Activated B cell treated with CpG ODN at 0.5 μM for 24 hours (primary cell): ENCODE measurements at regions of chr3 and their contacts with region 1.

Region 1: DNA sequence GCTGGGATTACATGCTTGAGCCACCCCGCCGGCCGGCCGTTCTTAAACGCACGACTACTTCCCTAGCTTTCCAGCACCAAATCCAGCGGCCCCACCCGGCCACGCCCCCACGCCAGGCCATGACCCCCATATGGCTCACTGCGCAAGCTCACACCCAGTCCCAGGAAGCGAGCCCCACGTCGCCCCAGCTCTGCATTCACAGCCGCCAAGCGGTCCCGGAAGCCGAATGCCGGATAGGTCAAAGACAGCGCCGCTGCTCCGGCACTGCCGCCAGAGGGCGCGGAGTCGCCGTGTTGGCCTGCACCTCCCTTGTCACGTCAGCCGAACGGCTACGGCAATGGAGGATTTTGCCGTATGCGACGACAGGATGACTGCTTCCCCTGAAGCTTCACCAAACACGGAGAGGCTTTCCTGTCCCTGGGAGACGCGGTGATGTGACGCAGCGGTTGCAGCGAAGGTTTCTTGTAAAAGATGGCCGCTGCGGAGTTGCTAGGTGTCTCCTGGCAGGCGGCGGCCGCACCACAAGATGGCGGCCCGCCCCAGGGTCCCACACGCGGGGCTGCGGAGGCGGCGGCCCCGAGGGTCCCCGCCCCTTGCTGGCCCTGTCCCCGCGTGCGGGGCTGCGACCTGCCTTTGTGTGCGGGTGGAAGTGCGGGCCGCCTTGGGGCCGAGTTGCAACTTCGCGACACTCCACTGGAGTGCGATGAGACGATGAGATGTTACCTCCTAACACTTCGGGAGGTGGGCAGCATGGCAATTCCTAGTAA is 30.2 kb upstream of the RPN1 start:
- DNase-seq: peak; percentile 93
- ATAC-seq: peak; percentile 96
- H3K4me3 Mint-ChIP-seq: peak overlapping the region; percentile 92
- H3K27ac Mint-ChIP-seq: peak overlapping the region; percentile 94
- H3K4me1 Mint-ChIP-seq: peaks cover 34% of the 10 kb centered on the region
- H3K27me3 Mint-ChIP-seq: no peaks in the 10 kb centered on the region
- CTCF ChIP-seq: peak; percentile 62

Region 2: DNA sequence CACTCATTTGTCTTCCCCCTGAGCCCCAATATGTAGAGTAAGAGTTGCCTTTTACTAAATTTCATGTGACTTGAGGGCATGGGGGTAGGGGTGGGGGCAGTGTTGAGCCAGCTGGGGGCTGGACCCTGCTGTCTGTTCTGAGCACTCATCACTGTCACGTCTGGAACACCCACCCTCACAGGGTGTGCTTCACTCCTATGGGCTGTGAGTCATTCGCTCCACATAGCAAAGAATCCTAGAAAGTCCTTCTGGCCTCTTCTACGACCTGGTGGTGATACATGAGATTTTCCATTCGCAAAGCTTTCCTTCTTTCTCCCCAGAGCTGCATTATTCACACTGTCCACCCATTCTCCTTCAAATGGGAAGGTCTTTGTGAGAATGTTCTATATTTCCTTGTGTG is 814.8 kb before region 1 on chr3:
- CTCF ChIA-PET with region 1: no interaction called
- POLR2A ChIA-PET with region 1: no interaction called
- intact Hi-C with region 1: no loop called
- DNase-seq: no peak
- ATAC-seq: no peak
- H3K4me3 Mint-ChIP-seq: no peak overlapping the region
- H3K27ac Mint-ChIP-seq: no peak overlapping the region
- H3K4me1 Mint-ChIP-seq: no peaks in the 10 kb centered on the region
- H3K27me3 Mint-ChIP-seq: no peaks in the 10 kb centered on the region
- CTCF ChIP-seq: no peak

Region 3: DNA sequence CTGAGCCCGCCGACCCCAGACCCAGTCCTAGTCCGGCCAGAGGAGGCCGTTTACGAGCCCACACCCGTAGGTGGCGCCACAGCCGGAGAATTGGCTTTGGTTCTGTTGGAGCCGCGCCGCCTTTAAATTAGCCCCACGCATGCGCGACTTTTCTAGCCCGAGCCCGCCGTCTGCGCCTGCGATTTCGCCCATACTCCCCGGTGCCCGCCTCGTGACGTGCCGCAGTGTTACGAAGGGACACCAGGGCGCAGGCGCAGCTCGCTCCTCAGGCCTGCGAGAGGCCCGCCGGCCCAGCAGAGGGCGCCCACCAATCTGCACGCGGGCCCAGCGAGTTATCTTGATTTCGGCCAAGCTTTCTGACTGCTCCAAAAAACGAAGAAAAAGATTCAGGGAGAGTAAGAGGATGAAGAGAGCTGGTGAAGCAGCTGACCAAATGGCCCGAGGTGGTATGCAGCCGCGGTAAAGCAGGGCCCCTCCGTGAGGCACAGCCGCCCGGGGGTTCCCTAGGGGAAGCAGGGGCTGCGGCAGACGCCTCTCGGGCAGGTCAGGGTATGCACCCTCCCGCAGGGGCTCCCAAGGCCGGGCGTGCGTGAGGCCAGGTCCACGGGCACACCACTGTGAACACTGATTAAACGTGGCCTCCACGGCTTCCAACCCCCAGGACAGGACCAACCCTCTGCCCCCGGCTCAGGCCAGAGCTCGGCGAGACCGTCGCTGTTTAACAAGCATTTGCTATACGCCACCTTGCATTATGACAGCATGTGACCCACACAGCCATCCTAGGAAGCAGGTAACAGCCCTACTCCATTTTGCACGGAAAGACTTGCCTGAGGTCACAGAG is 63.0 kb before region 1 on chr3:
- CTCF ChIA-PET with region 1: interaction called, 12 read pairs
- POLR2A ChIA-PET with region 1: interaction called, 20 read pairs
- intact Hi-C with region 1: loop called (anchors 1 kb)
- DNase-seq: peak; percentile 96
- ATAC-seq: peak; percentile 96
- H3K4me3 Mint-ChIP-seq: peak overlapping the region; percentile 91
- H3K27ac Mint-ChIP-seq: peak overlapping the region; percentile 88
- H3K4me1 Mint-ChIP-seq: peaks cover 23% of the 10 kb centered on the region
- H3K27me3 Mint-ChIP-seq: no peaks in the 10 kb centered on the region
- CTCF ChIP-seq: peak; percentile 94

Region 4: DNA sequence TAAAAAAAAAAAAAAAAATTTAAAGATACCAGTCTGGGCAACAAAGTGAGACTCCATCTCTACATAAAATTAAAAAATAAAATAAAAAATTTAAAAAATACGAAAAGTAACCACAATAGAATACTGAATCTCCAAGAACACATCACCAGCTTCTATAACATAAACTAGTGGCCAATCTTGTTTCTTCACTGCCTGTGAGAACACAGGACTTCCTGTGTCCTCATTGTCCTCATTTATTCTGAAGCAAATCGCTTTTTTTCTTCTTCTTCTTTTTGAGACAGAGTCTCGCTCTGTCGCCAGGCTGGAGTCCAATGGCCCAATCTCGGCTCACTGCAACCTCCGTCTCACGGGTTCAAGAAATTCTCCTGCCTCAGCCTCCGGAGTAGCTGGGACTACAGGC is 16.6 kb after region 1 on chr3:
- CTCF ChIA-PET with region 1: no interaction called
- POLR2A ChIA-PET with region 1: interaction called, 11 read pairs
- intact Hi-C with region 1: no loop called
- DNase-seq: no peak
- ATAC-seq: no peak
- H3K4me3 Mint-ChIP-seq: peak overlapping the region; percentile 24
- H3K27ac Mint-ChIP-seq: no peak overlapping the region
- H3K4me1 Mint-ChIP-seq: peaks cover 2% of the 10 kb centered on the region
- H3K27me3 Mint-ChIP-seq: no peaks in the 10 kb centered on the region
- CTCF ChIP-seq: no peak

Region 5: DNA sequence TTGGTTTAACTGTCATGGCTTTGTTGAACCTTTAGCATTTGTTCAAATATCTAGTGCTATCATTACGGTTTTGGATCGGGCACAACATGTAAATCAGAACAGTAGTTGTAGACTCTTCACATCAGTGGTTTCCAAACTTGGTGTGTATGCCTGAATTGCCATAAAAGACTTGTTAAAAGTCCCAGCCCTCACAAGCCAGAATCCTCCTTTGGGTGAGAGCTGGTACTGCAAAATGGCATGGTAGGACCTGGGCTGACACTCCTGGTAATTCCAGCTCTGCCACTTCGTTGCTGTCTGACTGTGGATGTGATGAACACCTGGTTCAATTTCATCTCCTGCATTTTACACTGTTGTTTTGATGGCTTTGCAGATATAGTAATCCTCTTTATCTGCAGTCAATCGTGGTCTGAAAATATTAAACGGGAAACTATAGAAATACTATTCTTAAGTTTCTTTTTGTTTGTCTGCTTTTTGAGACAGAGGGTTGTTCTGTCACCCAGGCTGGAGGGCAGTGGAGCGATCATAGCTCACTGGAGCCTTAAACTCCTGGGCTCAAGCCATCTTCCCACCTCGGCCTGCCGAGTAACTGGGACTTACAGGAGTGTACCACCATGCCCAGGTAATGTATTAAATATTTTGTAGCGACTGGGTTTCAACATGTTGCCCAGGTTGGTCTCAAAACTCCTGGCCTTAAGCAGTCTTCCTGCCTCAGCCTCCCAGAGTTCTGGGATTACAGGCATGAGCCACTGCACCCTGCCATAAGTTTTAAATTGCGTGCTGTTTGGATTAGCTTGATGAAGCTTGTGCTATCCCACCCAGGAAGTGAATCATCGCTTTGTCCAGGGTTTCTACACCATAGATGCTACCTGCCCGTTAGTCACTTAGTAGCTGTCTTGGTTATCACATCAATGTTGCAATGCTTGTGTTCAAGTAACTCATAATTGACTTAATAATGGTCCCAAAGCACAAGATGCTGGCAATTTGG is 106.8 kb after region 1 on chr3:
- CTCF ChIA-PET with region 1: interaction called, 17 read pairs
- POLR2A ChIA-PET with region 1: interaction called, 12 read pairs
- intact Hi-C with region 1: loop called (anchors 2 kb)
- DNase-seq: no peak
- ATAC-seq: peak; percentile 86
- H3K4me3 Mint-ChIP-seq: no peak overlapping the region
- H3K27ac Mint-ChIP-seq: peak overlapping the region; percentile 62
- H3K4me1 Mint-ChIP-seq: peaks cover 96% of the 10 kb centered on the region
- H3K27me3 Mint-ChIP-seq: no peaks in the 10 kb centered on the region
- CTCF ChIP-seq: no peak

Region 6: DNA sequence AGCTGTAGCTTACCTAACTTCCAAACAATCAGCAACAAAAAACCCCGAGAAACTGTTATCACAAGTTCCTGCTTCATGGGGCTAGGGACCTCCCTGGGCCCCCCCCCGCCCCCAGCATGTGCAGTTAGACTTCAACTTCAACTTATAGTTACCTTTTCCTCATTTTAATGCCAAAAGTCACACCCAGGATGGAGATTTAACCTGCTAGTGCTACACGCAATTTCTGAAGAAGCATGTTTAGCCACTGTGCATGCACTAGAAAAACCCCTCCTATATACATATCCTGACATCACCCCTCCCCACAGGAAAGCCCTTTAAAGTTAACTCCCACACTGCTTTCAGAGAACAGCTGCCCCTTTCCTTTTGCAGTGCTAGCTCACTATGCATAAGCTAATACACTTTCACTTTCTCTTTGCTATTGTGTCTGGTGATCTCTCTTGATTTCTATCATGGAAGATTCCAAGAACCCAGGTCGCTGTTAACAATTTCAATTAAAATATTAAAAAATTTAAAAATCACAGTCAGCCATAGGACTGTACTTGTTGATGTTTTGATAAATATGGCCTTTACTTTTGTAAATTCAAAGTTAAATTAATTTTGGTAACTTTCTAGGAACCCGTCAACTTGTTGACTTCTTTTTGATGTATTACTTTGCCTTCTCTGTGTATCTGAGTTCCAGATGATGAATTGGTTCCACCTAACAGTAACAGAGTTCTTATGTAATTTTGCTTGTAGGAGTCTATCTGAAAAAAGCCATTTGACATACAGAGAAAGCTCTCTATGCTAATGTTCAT is 123.4 kb after region 1 on chr3:
- CTCF ChIA-PET with region 1: interaction called, 12 read pairs
- POLR2A ChIA-PET with region 1: interaction called, 19 read pairs
- intact Hi-C with region 1: loop called (anchors 2 kb)
- DNase-seq: no peak
- ATAC-seq: peak; percentile 94
- H3K4me3 Mint-ChIP-seq: peak overlapping the region; percentile 55
- H3K27ac Mint-ChIP-seq: peak overlapping the region; percentile 83
- H3K4me1 Mint-ChIP-seq: peaks cover 54% of the 10 kb centered on the region
- H3K27me3 Mint-ChIP-seq: no peaks in the 10 kb centered on the region
- CTCF ChIP-seq: no peak